Activated naive CD4-positive, alpha-beta T cell treated with anti-CD3 and anti-CD28 coated beads for 36 hours (primary cell): ENCODE measurements at regions of chr18 and their contacts with region 1.

Region 1: DNA sequence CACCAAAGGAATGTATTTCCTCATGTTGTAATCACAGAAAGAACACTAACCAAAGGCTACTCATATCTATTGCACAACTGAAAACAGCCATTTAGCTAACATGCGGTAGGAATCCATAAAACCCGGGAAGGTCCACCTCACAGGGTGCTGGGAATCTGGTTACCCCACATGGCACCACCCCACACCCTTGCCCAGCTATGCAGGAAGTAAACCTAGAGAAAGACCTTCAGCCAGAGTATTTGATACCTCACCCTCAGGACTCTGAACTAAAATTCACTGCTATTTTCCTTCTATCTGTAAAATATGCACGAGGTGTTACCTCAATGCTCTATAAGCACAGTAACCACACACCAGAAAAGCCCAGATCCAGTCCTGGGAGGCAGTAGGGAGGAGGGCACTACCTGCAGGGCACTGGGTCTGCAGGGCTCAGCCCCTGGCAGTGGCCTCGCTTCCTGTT is 45.8 kb downstream of the PTPN2 start:
- DNase-seq: no peak
- H3K4me3 Mint-ChIP-seq: peak overlapping the region; percentile 46
- H3K27ac Mint-ChIP-seq: peak overlapping the region; percentile 84
- H3K4me1 Mint-ChIP-seq: peaks cover 52% of the 10 kb centered on the region
- H3K27me3 Mint-ChIP-seq: no peaks in the 10 kb centered on the region

Region 2: DNA sequence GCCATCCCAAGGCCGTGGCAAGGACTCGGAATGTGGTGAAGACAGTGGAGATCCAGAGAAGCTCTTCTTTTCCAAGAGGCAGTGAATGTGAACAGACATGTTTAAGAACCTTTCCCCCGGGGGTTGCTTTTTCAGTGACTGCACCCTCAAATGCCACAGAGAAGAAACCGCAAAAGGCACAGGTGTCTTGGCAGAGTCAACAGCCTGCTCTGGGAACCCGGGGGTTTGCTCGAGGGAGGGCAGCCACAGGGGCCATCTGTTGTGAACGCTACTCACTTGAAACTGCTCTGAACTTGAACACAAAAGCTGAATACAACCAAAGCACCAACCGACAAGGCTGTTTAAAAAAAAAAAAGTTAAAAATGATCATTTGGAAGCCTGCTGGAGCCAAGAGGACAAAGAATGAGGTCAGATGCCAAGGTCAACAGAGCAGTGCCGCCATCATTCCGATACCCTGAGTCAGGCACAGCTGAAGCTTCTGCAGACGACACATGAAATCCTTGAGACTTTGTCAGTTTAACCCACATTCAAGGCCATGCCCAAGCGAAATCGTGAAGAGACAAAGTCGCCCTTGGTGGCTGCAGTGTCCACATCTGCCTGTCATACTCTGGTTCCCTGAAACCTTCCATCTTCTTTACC is 88.0 kb before region 1 on chr18:
- CTCF ChIA-PET with region 1: no interaction called
- intact Hi-C with region 1: loop called (anchors 5 kb)
- DNase-seq: peak; percentile 67
- H3K4me3 Mint-ChIP-seq: peak overlapping the region; percentile 41
- H3K27ac Mint-ChIP-seq: peak overlapping the region; percentile 41
- H3K4me1 Mint-ChIP-seq: peaks cover 11% of the 10 kb centered on the region
- H3K27me3 Mint-ChIP-seq: peaks cover 3% of the 10 kb centered on the region

Region 3: GRCh38 chr18:12857215-12857905 is 19.2 kb after region 1 on chr18:
- CTCF ChIA-PET with region 1: interaction called, 3 read pairs
- intact Hi-C with region 1: loop called (anchors 1 kb)
- DNase-seq: peak; percentile 74
- H3K4me3 Mint-ChIP-seq: no peak overlapping the region
- H3K27ac Mint-ChIP-seq: peak overlapping the region; percentile 59
- H3K4me1 Mint-ChIP-seq: peaks cover 53% of the 10 kb centered on the region
- H3K27me3 Mint-ChIP-seq: no peaks in the 10 kb centered on the region

Region 4: GRCh38 chr18:12883684-12884405 is 45.6 kb after region 1 on chr18 and contains the start of gene PTPN2:
- CTCF ChIA-PET with region 1: interaction called, 3 read pairs
- intact Hi-C with region 1: loop called (anchors 1 kb)
- DNase-seq: peak; percentile 92
- H3K4me3 Mint-ChIP-seq: peak within 1 kb of the TSS; percentile 89
- H3K27ac Mint-ChIP-seq: peak within 1 kb of the TSS; percentile 90
- H3K4me1 Mint-ChIP-seq: peaks cover 53% of the 10 kb centered on the region
- H3K27me3 Mint-ChIP-seq: no peaks in the 10 kb centered on the region
- total RNA-seq, gene PTPN2: 68.5 to 71.8 TPM

Region 5: DNA sequence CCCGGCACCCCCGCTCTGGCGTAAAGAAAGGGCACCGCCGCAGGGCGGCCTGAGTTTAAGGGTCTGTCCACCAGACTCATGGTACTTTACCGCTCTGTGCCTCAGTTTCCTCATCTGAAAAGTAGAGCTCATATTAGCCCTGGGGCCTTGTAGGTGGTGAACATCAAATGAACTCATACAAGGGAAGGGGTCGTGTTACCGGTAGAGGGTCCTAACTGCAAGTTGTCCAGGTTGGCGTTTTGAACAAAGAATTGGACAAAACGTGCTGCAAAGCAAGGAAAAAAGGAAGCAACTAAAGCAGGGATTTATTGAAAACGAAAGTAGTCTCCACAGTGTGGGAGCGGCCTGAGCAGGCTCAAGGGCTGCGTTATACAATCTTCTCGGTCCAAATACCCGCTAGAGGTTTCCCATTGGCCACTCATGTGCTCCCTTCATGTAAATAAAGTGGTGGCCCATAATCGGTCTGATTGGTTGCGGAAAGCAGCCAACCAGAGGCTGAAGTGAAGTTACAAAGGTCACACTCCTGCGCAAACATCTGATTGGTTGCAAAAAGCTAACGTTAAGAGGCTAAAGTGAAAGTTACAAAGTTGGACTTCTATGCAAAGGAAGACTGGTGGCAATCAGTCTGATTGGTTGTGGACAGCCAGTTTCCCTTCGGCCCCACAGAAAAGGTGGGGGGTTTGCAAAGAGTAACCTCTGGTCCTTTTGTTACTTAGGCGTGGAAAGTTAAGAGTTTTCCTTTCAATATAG is 299.6 kb after region 1 on chr18:
- CTCF ChIA-PET with region 1: no interaction called
- intact Hi-C with region 1: loop called (anchors 1 kb)
- DNase-seq: peak; percentile 74
- H3K4me3 Mint-ChIP-seq: peak overlapping the region; percentile 96
- H3K27ac Mint-ChIP-seq: peak overlapping the region; percentile 75
- H3K4me1 Mint-ChIP-seq: peaks cover 24% of the 10 kb centered on the region
- H3K27me3 Mint-ChIP-seq: no peaks in the 10 kb centered on the region

Region 6: GRCh38 chr18:13381944-13382365 is 543.7 kb after region 1 on chr18:
- CTCF ChIA-PET with region 1: no interaction called
- intact Hi-C with region 1: loop called (anchors 2 kb)
- DNase-seq: peak; percentile 54
- H3K4me3 Mint-ChIP-seq: peak overlapping the region; percentile 71
- H3K27ac Mint-ChIP-seq: peak overlapping the region; percentile 94
- H3K4me1 Mint-ChIP-seq: peaks cover 72% of the 10 kb centered on the region
- H3K27me3 Mint-ChIP-seq: no peaks in the 10 kb centered on the region